ENCODE measurements at regions of chr16 and their contacts with region 1.

Region 1: GRCh38 chr16:70402916-70403659 is 35.8 kb downstream of the ST3GAL2 start:
- DNase-seq: no peak
- H3K4me3 Mint-ChIP-seq: peak overlapping the region; percentile 10
- H3K27ac Mint-ChIP-seq: peak overlapping the region; percentile 92
- H3K4me1 Mint-ChIP-seq: peaks cover 43% of the 10 kb centered on the region
- H3K27me3 Mint-ChIP-seq: no peaks in the 10 kb centered on the region

Region 2: DNA sequence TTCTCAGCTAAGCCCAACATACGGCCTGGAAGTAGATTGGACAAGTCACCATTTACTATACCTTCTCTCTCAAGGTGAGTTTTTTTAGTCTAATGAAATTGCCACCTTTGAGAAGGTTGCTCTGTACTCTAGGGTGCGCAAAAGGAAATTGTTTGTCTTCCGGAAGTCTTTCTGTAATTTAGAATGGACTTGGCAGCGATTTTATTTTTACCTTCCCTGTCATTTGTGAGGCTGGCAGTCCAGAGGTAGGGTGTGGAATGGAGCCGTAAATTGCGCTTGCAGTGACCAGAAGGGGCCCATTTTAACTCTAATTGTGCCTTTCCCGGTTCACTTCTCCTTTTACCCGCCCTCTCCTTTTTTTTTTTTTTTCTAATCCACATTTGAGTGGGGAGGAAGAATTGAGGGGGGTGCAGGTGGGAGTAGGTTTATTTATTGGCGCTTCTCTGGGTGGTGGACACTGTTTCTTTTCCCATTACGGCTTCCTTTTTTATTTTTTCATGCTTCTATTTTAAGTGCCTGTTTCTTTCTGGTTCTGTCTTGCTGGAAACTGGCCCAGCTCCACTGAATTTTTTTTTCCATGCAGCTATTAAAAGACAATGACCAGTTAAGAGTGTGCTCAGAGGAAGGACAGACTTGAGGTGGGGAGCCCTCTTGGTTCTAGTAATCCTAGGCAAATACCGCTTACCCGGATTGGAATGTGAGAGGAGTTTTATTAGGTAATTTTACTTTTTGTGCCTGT is 541.6 kb before region 1 on chr16:
- intact Hi-C with region 1: no loop called
- DNase-seq: no peak
- H3K4me3 Mint-ChIP-seq: no peak overlapping the region
- H3K27ac Mint-ChIP-seq: no peak overlapping the region
- H3K4me1 Mint-ChIP-seq: no peaks in the 10 kb centered on the region
- H3K27me3 Mint-ChIP-seq: no peaks in the 10 kb centered on the region

Region 3: GRCh38 chr16:70364399-70364798 is 38.7 kb before region 1 on chr16:
- intact Hi-C with region 1: no loop called
- DNase-seq: no peak
- H3K4me3 Mint-ChIP-seq: no peak overlapping the region
- H3K27ac Mint-ChIP-seq: no peak overlapping the region
- H3K4me1 Mint-ChIP-seq: no peaks in the 10 kb centered on the region
- H3K27me3 Mint-ChIP-seq: no peaks in the 10 kb centered on the region

Region 4: GRCh38 chr16:70428178-70428998 is 25.3 kb after region 1 on chr16:
- intact Hi-C with region 1: loop called (anchors 1 kb)
- DNase-seq: peak; percentile 57
- H3K4me3 Mint-ChIP-seq: peak overlapping the region; percentile 46
- H3K27ac Mint-ChIP-seq: peak overlapping the region; percentile 86
- H3K4me1 Mint-ChIP-seq: peaks cover 51% of the 10 kb centered on the region
- H3K27me3 Mint-ChIP-seq: no peaks in the 10 kb centered on the region

Measured in activated T-helper 1 cell treated with anti-CD3 and anti-CD28 coated beads, Interleukin-12 subunit alpha, Interleukin-12 subunit beta, Interleukin-2, Interleukin-4 antibody, amounts not matched to agents 30 ng/mL and 10 ng/mL and 1 ng/mL, durations not matched to agents 14 hours and 24 hours and 36 hours (primary cell).